Activated CD4-positive, alpha-beta T cell treated with anti-CD3 and anti-CD28 coated beads, Interleukin-2, amount 10 ng/mL, durations not matched to agents 24 days and 14 days (primary cell): ENCODE measurements at regions of chr19 and their contacts with region 1.

Region 1: DNA sequence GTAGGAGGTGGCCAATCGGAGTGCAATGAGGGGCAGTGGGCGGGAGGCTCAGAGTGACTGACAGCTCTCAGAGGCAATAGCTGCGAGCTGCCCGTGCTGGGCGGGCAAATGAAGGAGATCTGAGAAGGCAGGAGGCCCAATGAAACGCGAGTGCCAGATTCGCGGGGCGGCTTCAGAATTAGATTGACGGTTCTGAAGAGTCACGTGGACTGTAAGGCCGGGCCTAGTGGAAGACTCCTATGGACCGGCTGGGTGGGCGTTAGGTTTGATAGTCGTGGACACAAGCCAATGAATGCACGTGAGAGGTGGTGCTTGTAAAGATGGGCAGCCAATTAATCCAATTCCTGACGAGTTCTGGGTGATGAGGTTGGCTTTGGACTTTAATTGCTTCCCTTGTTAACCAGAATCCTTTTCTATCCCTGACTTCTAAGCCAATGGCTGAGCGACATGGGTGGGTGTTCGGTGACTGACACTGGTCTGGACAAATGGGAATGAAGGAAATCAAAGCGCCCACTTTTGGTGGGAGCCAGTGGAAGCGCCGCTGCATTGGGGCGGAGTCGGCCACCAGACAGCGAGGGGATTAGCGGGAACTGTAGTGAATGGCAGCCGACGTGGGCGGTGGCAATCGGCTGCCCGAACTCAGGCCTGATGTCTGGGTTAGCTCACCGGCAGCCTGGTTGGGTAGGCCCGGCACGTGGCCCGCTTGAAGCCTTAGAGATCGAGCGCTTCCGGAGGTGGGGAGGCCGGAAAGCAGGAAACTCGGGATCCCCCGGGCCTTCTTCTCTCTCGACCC is 524 bp upstream of the KHSRP start:
- DNase-seq: peak; percentile 100
- H3K4me3 Mint-ChIP-seq: peak overlapping the region; percentile 72
- H3K27ac Mint-ChIP-seq: peak overlapping the region; percentile 97
- H3K4me1 Mint-ChIP-seq: peaks cover 26% of the 10 kb centered on the region
- H3K27me3 Mint-ChIP-seq: no peaks in the 10 kb centered on the region

Region 2: GRCh38 chr19:5445071-5446062 is 979.8 kb before region 1 on chr19:
- intact Hi-C with region 1: no loop called
- DNase-seq: no peak
- H3K4me3 Mint-ChIP-seq: no peak overlapping the region
- H3K27ac Mint-ChIP-seq: no peak overlapping the region
- H3K4me1 Mint-ChIP-seq: no peaks in the 10 kb centered on the region
- H3K27me3 Mint-ChIP-seq: no peaks in the 10 kb centered on the region

Region 3: GRCh38 chr19:6362027-6362350 is 63.1 kb before region 1 on chr19:
- intact Hi-C with region 1: loop called (anchors 2 kb)
- DNase-seq: no peak
- H3K4me3 Mint-ChIP-seq: peak overlapping the region; percentile 100
- H3K27ac Mint-ChIP-seq: peak overlapping the region; percentile 98
- H3K4me1 Mint-ChIP-seq: peaks cover 17% of the 10 kb centered on the region
- H3K27me3 Mint-ChIP-seq: no peaks in the 10 kb centered on the region

Region 4: DNA sequence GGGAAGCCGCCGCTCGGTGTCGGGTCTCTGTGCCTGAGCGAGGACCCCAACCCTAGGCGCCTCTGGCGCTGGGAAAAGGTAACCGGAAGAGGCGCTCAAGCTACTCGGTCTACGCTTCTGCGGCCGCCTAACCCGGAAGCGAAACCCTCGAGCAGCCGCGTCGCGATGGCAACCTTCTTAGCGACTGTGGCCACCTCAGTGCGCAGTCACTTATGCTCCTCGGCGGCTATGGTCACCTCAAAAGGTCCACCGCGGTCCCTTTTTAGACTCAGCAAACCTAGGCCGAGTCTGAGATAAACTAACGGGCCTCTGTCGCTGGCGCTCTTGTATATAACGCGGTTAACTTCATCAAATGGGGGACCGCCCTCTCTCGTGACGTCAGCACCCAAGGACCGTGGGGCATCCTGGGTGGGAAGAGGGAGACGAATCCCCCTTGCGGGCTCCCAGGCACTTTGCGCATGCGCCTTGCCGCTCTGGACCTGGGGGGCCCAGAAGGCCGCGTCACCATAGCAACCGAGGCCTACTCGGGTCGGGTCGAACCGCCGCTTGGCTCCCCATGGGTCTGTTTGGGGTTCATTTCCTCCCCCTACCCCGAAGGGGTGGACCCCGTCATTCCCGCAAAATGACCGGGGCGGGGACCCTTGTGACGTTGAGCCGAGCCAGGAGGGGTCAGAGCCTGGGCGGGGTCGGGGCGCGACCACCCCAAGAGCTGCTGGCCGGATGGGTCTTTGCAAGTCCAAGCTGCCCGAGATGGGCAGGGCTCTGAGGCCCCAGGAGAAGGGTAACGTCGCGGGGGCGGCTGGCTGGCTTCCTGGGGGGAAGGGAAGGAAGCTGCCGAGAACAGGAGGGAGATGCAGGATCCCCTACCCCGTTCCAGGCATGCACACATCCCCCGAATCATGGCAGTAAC is 31.8 kb before region 1 on chr19 and contains the start of gene GTF2F1:
- intact Hi-C with region 1: loop called (anchors 1 kb)
- DNase-seq: peak; percentile 97
- H3K4me3 Mint-ChIP-seq: peak within 1 kb of the TSS; percentile 90
- H3K27ac Mint-ChIP-seq: peak within 1 kb of the TSS; percentile 95
- H3K4me1 Mint-ChIP-seq: peaks cover 18% of the 10 kb centered on the region
- H3K27me3 Mint-ChIP-seq: no peaks in the 10 kb centered on the region
- total RNA-seq, gene GTF2F1: 60.7 and 63.5 TPM in 2 replicates

Region 5: GRCh38 chr19:6501740-6502648 is 76.9 kb after region 1 on chr19 and contains the start of gene TUBB4A:
- intact Hi-C with region 1: loop called (anchors 2 kb)
- DNase-seq: peak; percentile 85
- H3K4me3 Mint-ChIP-seq: peak within 1 kb of the TSS; percentile 83
- H3K27ac Mint-ChIP-seq: peak within 1 kb of the TSS; percentile 65
- H3K4me1 Mint-ChIP-seq: peaks cover 21% of the 10 kb centered on the region
- H3K27me3 Mint-ChIP-seq: peaks cover 22% of the 10 kb centered on the region
- total RNA-seq, gene TUBB4A: 2.8 and 3.3 TPM in 2 replicates

Region 6: DNA sequence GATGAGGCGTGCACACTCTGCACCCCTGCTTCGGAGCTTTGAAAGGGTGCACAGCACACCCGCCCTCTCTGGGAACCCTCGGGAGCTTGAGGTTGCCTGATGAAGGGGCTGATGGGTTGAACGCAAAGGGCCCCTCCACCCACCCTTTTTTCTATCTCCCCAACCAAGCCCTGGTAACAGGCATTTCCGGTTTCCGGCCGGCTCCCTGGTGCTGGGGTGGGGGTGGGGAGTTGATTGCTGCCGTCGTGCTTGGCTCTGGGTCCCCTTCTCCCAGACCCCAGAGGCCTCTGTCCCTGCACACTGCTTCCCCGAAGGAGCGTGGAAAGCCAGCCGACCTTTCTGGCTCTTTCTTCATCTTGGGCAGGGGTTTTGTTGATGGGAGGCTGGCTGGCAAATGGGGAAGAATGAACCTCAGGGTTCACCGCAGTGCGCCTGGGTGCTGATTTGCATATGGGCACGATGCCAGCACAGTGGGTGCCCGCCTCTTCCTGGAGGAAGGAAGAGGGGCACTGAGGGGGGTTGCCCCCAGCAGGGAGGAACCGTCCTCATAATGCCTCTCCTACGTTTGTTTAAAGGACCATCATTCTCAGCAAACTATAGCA is 376.5 kb after region 1 on chr19:
- intact Hi-C with region 1: loop called (anchors 5 kb)
- DNase-seq: peak; percentile 93
- H3K4me3 Mint-ChIP-seq: peak overlapping the region; percentile 93
- H3K27ac Mint-ChIP-seq: peak overlapping the region; percentile 99
- H3K4me1 Mint-ChIP-seq: peaks cover 55% of the 10 kb centered on the region
- H3K27me3 Mint-ChIP-seq: no peaks in the 10 kb centered on the region